ENCODE measurements at regions of chr7 and their contacts with region 1.

Region 1: GRCh38 chr7:139613971-139614411 is 90.5 kb downstream of the CLEC2L start:
- DNase-seq: no peak
- ATAC-seq: no peak
- H3K4me3 ChIP-seq: no peak overlapping the region
- H3K27ac ChIP-seq: no peak overlapping the region
- H3K4me1 ChIP-seq: peaks cover 1% of the 10 kb centered on the region
- H3K27me3 ChIP-seq: no peaks in the 10 kb centered on the region
- CTCF ChIP-seq: no peak

Region 2: GRCh38 chr7:139602143-139602722 is 11.8 kb before region 1 on chr7:
- CTCF ChIA-PET with region 1: interaction called, 14 read pairs
- POLR2A ChIA-PET with region 1: no interaction called
- intact Hi-C with region 1: no loop called
- DNase-seq: peak; percentile 39
- ATAC-seq: peak; percentile 70
- H3K4me3 ChIP-seq: no peak overlapping the region
- H3K27ac ChIP-seq: no peak overlapping the region
- H3K4me1 ChIP-seq: 0 out of 2 replicates have a peak, but pooled peaks cover 7% of the 10 kb centered on the region
- H3K27me3 ChIP-seq: no peaks in the 10 kb centered on the region
- CTCF ChIP-seq: peak; percentile 61